IMR-90 (cell line): ENCODE measurements at regions of chr12 and their contacts with region 1.

Region 1: DNA sequence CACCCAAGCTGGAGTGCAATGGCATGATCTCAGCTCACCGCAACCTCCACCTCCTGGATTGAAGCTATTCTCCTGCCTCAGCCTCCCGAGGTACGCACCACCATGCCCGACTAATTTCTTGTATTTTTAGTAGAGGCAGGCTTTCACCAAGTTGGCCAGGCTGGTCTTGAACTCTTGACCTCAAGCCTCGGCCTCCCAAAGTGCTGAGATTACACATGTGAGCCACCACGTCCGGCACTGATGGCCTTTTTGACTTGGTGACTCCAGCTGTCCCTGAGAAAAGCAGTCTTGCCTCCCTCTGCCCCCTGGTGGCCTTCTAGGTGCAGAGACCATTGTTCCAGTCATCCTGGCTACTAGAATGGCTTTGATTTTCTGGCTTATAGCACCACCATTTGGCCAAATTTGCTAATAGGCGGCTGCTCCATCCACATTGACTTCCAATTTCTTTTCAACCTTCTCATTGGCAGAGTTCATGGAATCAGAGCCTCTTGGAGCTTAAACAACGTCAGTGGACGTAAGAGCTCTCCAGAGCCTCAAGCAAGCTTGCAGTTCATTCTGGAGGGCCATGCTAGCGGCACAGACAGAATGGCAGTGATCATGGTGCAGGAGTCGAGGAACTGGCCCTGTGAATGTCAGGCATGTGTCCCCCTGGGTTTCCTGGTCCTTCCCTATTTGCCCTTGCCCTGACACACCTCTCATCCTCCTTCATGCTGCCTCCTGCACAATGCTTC is 25.4 kb upstream of the EIF4B start:
- DNase-seq: peak; percentile 88
- ATAC-seq: peak; percentile 83
- H3K4me3 ChIP-seq: no peak overlapping the region
- H3K27ac ChIP-seq: no peak overlapping the region
- H3K4me1 ChIP-seq: peaks cover 9% of the 10 kb centered on the region
- H3K27me3 ChIP-seq: peaks cover 5% of the 10 kb centered on the region
- CTCF ChIP-seq: peak; percentile 100; the same call in 1 of the 2 replicates
- POLR2A ChIP-seq: peak; percentile 53; the same call in 1 of the 2 replicates
- RAD21 ChIP-seq: peak; percentile 100

Region 2: DNA sequence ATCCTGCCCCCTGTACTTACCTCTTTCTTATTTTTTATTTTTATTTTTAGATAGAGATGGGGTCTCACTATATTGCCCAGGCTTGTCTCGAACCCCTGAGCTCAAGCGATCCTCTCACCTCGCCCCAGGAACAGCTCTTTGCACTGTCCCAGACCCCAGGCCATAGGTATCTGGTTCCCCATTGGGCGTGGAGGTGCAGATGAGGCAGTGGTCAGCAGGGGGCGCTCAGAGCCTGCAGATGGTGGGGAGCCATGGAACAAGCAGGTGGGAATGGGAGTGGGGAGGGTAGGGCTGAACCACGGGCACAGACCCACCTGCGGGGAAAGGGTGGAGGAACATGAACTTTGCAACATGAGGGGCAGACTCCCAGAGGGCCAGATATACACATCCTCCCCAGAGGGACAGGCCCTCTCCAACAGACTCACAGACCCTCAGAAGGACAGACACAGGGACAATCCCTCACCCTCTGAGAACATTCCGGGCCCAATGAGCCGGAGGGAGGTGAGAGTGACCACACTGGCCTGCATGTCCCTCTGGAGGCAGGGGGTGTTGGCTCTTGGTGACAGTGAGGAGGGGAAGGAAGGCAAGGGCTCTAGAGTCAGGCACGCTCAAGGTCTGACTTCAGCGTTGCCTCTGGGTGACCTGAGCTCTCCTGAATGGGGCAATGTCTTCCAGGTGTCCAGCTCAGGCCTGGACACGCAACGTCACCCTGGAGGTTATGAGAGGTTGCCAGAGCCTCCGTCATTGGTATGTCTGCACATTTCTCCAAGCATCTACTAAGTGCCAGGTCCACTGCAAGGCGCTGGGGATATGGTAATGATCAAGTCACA is 823.9 kb before region 1 on chr12:
- CTCF ChIA-PET with region 1: no interaction called
- POLR2A ChIA-PET with region 1: no interaction called
- dilution Hi-C with region 1: no loop called
- in situ Hi-C with region 1: loop called (anchors 10 kb)
- intact Hi-C with region 1: no loop called
- DNase-seq: peak; percentile 42
- ATAC-seq: peak; percentile 83
- H3K4me3 ChIP-seq: no peak overlapping the region
- H3K27ac ChIP-seq: no peak overlapping the region
- H3K4me1 ChIP-seq: no peaks in the 10 kb centered on the region
- H3K27me3 ChIP-seq: no peaks in the 10 kb centered on the region
- CTCF ChIP-seq: peak; percentile 97
- POLR2A ChIP-seq: peak; percentile 55; the same call in 1 of the 2 replicates
- RAD21 ChIP-seq: peak; percentile 98

Region 3: DNA sequence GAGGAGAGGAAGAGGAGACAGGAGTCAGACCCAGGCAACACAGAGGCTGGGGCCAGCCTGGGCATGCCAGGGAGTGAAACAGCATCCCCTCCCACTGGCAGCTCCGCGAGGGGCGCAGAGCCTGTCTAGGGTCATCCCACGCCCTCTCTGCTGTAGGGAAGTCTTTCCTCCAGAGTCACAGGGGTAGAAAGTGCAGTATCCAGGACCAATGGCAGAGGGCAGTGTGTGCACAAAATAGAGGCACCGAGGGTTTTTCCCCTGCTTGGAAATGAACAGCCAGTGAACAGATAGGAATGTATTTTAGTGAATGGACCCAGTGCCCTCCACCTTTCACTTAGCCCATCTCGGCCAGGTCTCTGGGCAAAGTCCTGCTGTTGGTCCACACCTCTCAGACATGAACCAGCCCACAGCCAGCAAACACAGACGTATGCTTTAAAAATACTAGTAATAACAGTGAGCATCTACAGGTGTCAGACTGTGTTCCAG is 397.8 kb before region 1 on chr12:
- CTCF ChIA-PET with region 1: no interaction called
- POLR2A ChIA-PET with region 1: no interaction called
- dilution Hi-C with region 1: no loop called
- in situ Hi-C with region 1: loop called (anchors 10 kb)
- intact Hi-C with region 1: loop called (anchors 2 kb)
- DNase-seq: peak; percentile 43
- ATAC-seq: peak; percentile 99
- H3K4me3 ChIP-seq: no peak overlapping the region
- H3K27ac ChIP-seq: no peak overlapping the region
- H3K4me1 ChIP-seq: no peaks in the 10 kb centered on the region
- H3K27me3 ChIP-seq: peaks cover 49% of the 10 kb centered on the region
- CTCF ChIP-seq: peak; percentile 85
- POLR2A ChIP-seq: no peak
- RAD21 ChIP-seq: peak; percentile 87

Region 4: GRCh38 chr12:52884526-52885293 is 96.1 kb before region 1 on chr12:
- CTCF ChIA-PET with region 1: interaction called, 130 read pairs
- POLR2A ChIA-PET with region 1: interaction called, 4 read pairs
- dilution Hi-C with region 1: loop called (anchors 25 kb)
- in situ Hi-C with region 1: loop called (anchors 5 kb)
- intact Hi-C with region 1: loop called (anchors 1 kb)
- DNase-seq: peak; percentile 36
- ATAC-seq: peak; percentile 85
- H3K4me3 ChIP-seq: no peak overlapping the region
- H3K27ac ChIP-seq: no peak overlapping the region
- H3K4me1 ChIP-seq: no peaks in the 10 kb centered on the region
- H3K27me3 ChIP-seq: no peaks in the 10 kb centered on the region
- CTCF ChIP-seq: peak; percentile 97
- POLR2A ChIP-seq: peak; percentile 56
- RAD21 ChIP-seq: peak; percentile 99

Region 5: DNA sequence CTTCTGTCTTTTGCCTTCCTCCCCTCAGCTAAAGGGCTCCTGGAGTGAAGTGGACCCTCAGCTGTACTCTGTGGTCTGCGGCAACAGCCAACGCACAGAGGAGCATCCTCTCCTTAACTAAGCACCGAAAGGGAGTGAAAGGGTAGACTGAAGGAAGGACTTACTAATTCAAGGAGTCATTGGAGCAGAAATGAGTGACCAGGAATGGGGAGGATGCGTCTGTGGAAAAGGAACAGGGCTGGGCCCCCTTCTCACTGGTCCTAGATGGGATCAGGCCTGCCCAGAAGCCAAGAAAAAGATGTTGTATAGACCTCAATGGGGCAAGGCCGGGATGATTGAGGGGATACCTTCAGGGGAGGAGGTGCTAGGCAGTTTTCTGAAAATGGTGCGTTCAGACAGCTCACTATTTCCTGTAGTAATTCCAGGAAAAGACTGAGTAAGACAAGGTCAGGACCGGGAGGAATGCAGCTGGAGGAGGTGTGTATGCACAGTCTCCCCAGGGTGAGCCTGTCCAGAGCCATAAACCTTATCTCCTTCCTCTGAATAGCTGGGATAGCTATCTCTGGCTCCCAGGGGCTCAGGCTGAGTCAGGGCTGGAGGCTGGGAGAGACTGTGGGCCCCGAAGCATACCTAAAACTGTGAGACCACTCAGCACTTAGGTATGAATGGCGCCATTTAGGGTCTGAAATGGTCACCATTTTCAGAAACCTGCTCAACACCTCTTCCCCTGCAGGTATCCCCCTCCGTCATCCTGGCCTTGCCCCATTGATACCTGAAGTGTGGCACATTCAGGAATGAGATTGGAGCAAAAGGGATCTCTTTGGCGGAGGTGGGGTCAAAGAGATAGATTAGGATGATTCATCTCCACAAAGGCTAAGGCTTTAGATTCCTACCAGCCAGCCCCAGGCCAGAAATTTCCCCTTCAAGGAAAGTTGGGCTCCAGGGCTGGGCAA is 55.8 kb before region 1 on chr12:
- CTCF ChIA-PET with region 1: interaction called, 12 read pairs
- POLR2A ChIA-PET with region 1: no interaction called
- dilution Hi-C with region 1: no loop called
- in situ Hi-C with region 1: no loop called
- intact Hi-C with region 1: no loop called
- DNase-seq: peak; percentile 93
- ATAC-seq: peak; percentile 93
- H3K4me3 ChIP-seq: no peak overlapping the region
- H3K27ac ChIP-seq: peak overlapping the region; percentile 88
- H3K4me1 ChIP-seq: peaks cover 34% of the 10 kb centered on the region
- H3K27me3 ChIP-seq: no peaks in the 10 kb centered on the region
- CTCF ChIP-seq: no peak
- POLR2A ChIP-seq: no peak
- RAD21 ChIP-seq: peak; percentile 10; the same call in 1 of the 2 replicates

Region 6: DNA sequence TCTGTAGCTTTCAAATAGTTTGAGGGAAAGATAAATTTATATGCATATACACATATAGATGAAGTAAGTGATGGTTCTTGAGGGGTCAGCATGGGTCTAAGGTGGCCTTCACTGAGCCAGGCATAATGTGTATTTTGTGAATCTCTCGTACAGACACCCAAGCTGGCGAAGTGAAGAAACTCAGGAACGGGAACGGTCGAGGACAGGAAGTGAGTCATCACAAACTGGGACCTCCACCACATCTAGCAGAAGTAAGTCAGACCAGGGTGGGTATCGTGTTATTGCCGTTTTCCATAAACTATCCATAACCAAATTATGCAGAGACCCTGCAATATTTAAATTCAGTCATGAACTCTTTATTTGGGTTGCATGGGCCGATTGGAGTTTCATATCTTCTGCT is 53.6 kb after region 1 on chr12:
- CTCF ChIA-PET with region 1: no interaction called
- POLR2A ChIA-PET with region 1: no interaction called
- dilution Hi-C with region 1: no loop called
- in situ Hi-C with region 1: no loop called
- intact Hi-C with region 1: no loop called
- DNase-seq: no peak
- ATAC-seq: no peak
- H3K4me3 ChIP-seq: no peak overlapping the region
- H3K27ac ChIP-seq: no peak overlapping the region
- H3K4me1 ChIP-seq: no peaks in the 10 kb centered on the region
- H3K27me3 ChIP-seq: no peaks in the 10 kb centered on the region
- CTCF ChIP-seq: no peak
- POLR2A ChIP-seq: no peak
- RAD21 ChIP-seq: no peak